ENCODE measurements at regions of chr1 and their contacts with region 1.

Region 1: DNA sequence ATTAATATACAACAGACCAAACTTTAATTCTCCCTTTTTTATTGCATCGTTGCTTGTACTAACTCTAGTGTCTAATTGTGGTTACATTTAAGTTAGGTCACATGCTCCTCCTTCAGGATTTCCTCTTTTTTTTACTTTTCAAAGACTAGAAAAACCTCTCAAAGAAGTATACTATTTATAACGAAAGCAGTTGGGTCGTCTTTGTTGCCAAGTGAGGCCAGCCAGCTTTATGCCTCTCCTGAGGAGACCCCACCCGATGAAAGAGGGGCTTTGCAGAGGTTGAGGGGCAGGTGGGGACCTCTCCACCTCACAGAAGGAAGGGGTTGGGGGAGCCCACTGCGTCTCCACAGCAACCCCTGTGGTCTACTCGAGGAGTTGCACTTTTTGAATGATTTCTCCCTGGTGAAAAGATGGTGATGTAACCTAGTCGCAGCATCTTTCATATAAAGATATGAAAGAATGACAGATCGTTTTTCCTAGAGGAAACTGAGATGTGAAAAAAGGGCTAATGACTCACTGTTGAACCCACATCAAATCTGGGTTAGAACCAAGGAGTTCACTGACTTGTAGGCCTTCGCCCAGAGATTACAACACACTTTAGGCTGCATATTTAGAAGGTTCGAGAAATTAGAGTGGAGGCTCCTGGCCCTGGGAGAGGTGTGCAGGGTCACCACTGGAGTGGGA is 6.4 kb downstream of the TGFB2 start:
- DNase-seq: peak in 2 of 5 donors; percentile 46
- H3K4me3 ChIP-seq: peak overlapping the region; percentile 21
- H3K27ac ChIP-seq: peak overlapping the region in 1 of 2 donors; percentile 80
- H3K4me1 ChIP-seq: peaks cover 4% of the 10 kb centered on the region
- H3K27me3 ChIP-seq: no peaks in the 10 kb centered on the region
- CTCF ChIP-seq: peak; percentile 19 to 52 (median 33)
- EP300 ChIP-seq: no peak
- POLR2A ChIP-seq: no peak

Region 2: DNA sequence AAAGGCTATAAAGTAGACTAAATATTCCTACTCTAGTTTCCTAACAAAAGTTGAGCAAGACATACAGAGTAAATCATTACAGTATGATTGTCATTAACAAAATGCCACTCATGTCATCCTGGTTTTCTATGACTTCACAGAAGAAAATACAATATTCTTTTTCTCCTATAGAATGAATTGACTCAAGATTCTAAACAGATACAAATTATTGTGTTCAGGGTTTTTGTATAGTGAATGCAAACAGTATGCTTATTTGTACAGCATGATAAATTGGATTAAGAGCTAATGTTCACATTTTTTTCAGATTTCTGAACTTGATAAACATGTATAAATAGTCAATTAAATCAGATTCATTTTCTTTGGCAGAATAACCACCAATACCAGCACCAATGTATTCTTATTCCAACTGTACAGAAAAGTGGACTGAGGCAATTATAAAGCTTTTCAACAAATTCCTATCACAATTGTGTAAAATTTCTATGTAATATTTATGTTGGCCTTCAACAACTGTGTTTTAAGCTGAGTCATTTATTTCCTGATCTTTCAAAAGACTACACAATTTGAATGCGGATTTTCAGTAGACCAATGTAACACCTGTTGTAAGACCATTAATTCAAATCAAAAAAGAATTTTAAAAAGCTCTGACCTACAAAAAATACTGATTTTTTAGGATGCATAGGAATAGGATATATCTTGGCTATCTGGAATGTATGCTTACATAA is 746.3 kb before region 1 on chr1:
- intact Hi-C with region 1: no loop called
- DNase-seq: no peak
- H3K4me3 ChIP-seq: no peak overlapping the region
- H3K27ac ChIP-seq: no peak overlapping the region
- H3K4me1 ChIP-seq: no peaks in the 10 kb centered on the region
- H3K27me3 ChIP-seq: no peaks in the 10 kb centered on the region
- CTCF ChIP-seq: no peak
- EP300 ChIP-seq: no peak
- POLR2A ChIP-seq: no peak

Region 3: GRCh38 chr1:218299416-218299815 is 52.1 kb before region 1 on chr1:
- intact Hi-C with region 1: no loop called
- DNase-seq: no peak
- H3K4me3 ChIP-seq: no peak overlapping the region
- H3K27ac ChIP-seq: no peak overlapping the region
- H3K4me1 ChIP-seq: no peaks in the 10 kb centered on the region
- H3K27me3 ChIP-seq: no peaks in the 10 kb centered on the region
- CTCF ChIP-seq: no peak
- EP300 ChIP-seq: no peak
- POLR2A ChIP-seq: no peak

Region 4: GRCh38 chr1:218439541-218440295 is 88.2 kb after region 1 on chr1:
- intact Hi-C with region 1: loop called in 1 of 4 experiments (anchors 10 kb)
- DNase-seq: no peak
- H3K4me3 ChIP-seq: no peak overlapping the region
- H3K27ac ChIP-seq: no peak overlapping the region
- H3K4me1 ChIP-seq: no peaks in the 10 kb centered on the region
- H3K27me3 ChIP-seq: no peaks in the 10 kb centered on the region
- CTCF ChIP-seq: no peak
- EP300 ChIP-seq: no peak
- POLR2A ChIP-seq: no peak

Measured in ovary (tissue), 10 donors.